ENCODE measurements at regions of chr12 and their contacts with region 1.

Region 1: DNA sequence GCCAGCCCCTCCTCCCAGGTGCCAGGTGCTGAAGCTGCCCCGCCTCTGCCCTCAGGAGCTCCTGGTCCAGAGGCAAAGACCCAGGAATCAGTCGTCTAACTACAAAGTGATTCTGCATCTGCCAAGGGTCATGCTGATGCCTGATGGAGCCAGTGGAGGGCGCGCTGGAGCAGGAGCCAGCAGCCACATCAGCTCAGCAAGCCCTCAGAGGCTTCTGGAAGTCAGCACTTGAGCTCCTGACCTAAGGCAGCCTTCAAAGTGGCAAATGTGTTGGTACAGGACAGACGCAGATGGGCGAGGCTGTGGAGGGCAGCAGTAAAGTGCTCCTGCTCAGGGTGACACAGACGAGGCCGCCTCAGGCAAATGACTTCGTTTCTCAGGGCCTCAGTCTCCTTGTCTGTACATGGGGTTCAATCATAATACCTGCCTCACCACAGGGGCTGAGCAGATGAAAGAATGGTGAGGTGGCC is 10.9 kb downstream of the C12orf43 start:
- DNase-seq: peak; percentile 57 to 87
- H3K4me3 ChIP-seq: no peak overlapping the region
- H3K27ac ChIP-seq: no peak overlapping the region
- H3K4me1 ChIP-seq: no peaks in the 10 kb centered on the region
- H3K27me3 ChIP-seq: no peaks in the 10 kb centered on the region
- CTCF ChIP-seq: peak; percentile 93 to 96 (median 96)
- EP300 ChIP-seq: no peak
- POLR2A ChIP-seq: no peak
- RAD21 ChIP-seq: peak; percentile 74 to 81

Region 2: DNA sequence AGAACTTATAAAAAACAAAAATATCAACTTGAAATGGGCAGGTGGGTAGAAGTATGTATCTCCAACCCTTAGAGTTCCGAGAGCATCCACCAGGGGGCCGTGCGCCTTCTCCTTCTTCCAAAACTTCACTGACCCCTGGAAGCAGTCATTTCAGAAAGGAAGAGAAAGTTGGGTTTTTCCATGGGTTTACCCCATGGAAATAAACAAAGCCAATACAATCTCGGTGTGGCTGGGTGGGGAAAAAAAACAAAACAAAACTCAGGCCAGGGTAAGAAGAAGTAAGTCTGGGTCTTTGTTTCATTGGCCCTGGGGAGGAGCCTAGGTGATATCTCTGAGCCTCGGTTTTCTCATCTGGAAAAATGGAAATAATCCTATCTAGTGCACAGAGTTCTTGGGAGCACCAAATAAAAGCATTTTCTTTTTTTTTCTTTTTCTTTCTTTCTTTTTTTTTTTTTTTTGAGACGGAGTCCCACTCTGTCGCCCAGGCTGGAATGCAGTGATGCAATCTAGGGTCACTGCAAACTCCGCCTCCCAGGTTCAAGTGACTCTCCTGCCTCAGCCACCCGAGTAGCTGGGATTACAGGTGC is 60.6 kb before region 1 on chr12:
- CTCF ChIA-PET with region 1: interaction called, 15 read pairs
- POLR2A ChIA-PET with region 1: interaction called, 3 read pairs
- DNase-seq: peak; percentile 36 to 90
- H3K4me3 ChIP-seq: no peak overlapping the region
- H3K27ac ChIP-seq: no peak overlapping the region
- H3K4me1 ChIP-seq: no peaks in the 10 kb centered on the region
- H3K27me3 ChIP-seq: no peaks in the 10 kb centered on the region
- CTCF ChIP-seq: peak; percentile 64 to 73 (median 73)
- EP300 ChIP-seq: no peak
- POLR2A ChIP-seq: no peak
- RAD21 ChIP-seq: peak; percentile 42 to 63

Region 3: DNA sequence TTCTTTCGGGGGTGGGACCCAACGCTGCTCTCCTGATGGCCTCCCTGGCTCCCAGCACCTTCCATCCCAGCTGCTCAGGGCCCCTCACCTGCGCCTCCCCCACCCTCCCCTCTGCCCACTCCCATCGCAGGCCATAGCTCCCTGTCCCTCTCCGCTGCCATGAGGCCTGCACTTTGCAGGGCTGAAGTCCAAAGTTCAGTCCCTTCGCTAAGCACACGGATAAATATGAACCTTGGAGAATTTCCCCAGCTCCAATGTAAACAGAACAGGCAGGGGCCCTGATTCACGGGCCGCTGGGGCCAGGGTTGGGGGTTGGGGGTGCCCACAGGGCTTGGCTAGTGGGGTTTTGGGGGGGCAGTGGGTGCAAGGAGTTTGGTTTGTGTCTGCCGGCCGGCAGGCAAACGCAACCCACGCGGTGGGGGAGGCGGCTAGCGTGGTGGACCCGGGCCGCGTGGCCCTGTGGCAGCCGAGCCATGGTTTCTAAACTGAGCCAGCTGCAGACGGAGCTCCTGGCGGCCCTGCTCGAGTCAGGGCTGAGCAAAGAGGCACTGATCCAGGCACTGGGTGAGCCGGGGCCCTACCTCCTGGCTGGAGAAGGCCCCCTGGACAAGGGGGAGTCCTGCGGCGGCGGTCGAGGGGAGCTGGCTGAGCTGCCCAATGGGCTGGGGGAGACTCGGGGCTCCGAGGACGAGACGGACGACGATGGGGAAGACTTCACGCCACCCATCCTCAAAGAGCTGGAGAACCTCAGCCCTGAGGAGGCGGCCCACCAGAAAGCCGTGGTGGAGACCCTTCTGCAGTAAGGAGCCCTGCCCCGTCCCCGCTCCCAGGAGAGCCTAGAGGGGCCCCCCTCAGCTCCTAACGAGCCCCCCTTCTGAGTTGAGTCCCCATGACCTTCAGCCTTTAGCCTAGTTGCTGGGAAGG is 26.8 kb before region 1 on chr12 and contains the start of gene HNF1A:
- CTCF ChIA-PET with region 1: interaction called, 26 read pairs
- POLR2A ChIA-PET with region 1: interaction called, 5 read pairs
- DNase-seq: no peak
- H3K4me3 ChIP-seq: no peak within 1 kb of the TSS
- H3K27ac ChIP-seq: no peak within 1 kb of the TSS
- H3K4me1 ChIP-seq: peaks cover 0 to 5% (median 1%) of the 10 kb centered on the region in 4 experiments; a peak in 3 of 7 replicates
- H3K27me3 ChIP-seq: no peaks in the 10 kb centered on the region
- CTCF ChIP-seq: no peak
- EP300 ChIP-seq: no peak
- POLR2A ChIP-seq: no peak
- RAD21 ChIP-seq: no peak
- total RNA-seq, gene HNF1A: not detected in 2 replicates

Region 4: DNA sequence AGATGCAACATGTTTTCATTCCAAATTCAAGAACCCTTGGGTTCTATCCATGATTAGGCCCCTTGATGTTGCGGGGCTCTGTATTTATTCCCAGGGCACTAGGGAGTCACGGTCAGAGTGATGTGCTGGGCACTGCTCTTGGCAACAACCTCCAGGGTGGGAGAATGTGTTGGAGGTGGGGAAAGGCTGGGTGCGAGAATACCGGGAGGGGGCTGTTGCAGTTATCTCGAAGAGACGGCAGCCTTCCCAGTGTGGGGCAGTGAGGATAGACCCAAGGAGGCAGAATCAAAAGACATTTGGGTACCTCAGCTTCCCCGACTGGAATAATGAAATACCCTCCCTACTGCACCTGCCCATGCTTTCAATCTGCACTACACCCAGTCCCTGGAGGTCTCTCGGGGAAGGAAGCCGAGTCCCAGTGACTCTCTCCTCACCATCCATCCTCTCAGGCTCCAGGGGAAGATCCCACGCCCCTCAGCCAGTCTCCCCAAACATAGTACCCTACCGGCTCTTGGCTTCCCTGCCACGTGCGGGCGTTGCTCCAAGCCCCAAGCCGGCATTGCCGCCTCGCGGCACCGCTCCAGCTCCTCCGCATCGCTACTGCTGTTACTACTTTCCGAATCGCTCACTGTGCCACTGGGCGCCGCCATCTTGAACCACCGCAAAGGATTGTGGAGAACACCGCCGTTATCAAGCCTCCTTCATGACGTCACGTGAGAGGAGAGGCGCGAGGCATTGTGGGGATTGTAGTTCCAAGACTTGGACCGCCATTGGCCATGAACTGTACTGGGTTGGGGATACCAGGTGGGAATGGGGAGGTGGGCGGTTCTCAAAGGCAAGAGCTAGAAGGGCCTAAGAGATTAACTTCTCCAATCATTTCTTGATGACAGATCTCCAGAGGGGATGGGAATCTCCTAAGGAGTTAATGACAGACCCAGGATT is 10.7 kb after region 1 on chr12 and contains the start of gene C12orf43:
- CTCF ChIA-PET with region 1: interaction called, 18 read pairs
- POLR2A ChIA-PET with region 1: interaction called, 19 read pairs
- DNase-seq: peak; percentile 65 to 96
- H3K4me3 ChIP-seq: peak within 1 kb of the TSS; percentile 95 to 100 (median 98)
- H3K27ac ChIP-seq: peak within 1 kb of the TSS; percentile 79
- H3K4me1 ChIP-seq: peaks cover 0 to 4% (median 3%) of the 10 kb centered on the region in 4 experiments; a peak in 5 of 7 replicates
- H3K27me3 ChIP-seq: no peaks in the 10 kb centered on the region
- CTCF ChIP-seq: no peak
- EP300 ChIP-seq: no peak
- POLR2A ChIP-seq: peak; percentile 79 to 95
- RAD21 ChIP-seq: no peak; a peak in 1 of 4 replicates
- total RNA-seq, gene C12orf43: 22.3 and 23.7 TPM in 2 replicates

Region 5: GRCh38 chr12:121060149-121061001 is 55.0 kb after region 1 on chr12:
- CTCF ChIA-PET with region 1: interaction called, 19 read pairs
- POLR2A ChIA-PET with region 1: no interaction called
- DNase-seq: peak; percentile 17 to 84
- H3K4me3 ChIP-seq: peak overlapping the region in 3 of 4 experiments; percentile 12 to 46 (median 29); a peak in 5 of 8 replicates
- H3K27ac ChIP-seq: peak overlapping the region; percentile 59; the same call in 1 of the 2 replicates
- H3K4me1 ChIP-seq: peaks cover 0 to 3% (median 0%) of the 10 kb centered on the region in 4 experiments; a peak in 1 of 7 replicates
- H3K27me3 ChIP-seq: no peaks in the 10 kb centered on the region
- CTCF ChIP-seq: peak; percentile 41 to 57 (median 53)
- EP300 ChIP-seq: no peak
- POLR2A ChIP-seq: no peak
- RAD21 ChIP-seq: peak; percentile 52 to 61

Region 6: GRCh38 chr12:121110211-121110940 is 105.0 kb after region 1 on chr12:
- CTCF ChIA-PET with region 1: interaction called, 22 read pairs
- POLR2A ChIA-PET with region 1: interaction called, 3 read pairs
- DNase-seq: peak in 1 of 2 experiments; percentile 68
- H3K4me3 ChIP-seq: no peak overlapping the region
- H3K27ac ChIP-seq: no peak overlapping the region
- H3K4me1 ChIP-seq: no peaks in the 10 kb centered on the region
- H3K27me3 ChIP-seq: no peaks in the 10 kb centered on the region
- CTCF ChIP-seq: peak; percentile 63 to 97 (median 90)
- EP300 ChIP-seq: no peak
- POLR2A ChIP-seq: no peak
- RAD21 ChIP-seq: peak; percentile 94 to 96

Region 7: DNA sequence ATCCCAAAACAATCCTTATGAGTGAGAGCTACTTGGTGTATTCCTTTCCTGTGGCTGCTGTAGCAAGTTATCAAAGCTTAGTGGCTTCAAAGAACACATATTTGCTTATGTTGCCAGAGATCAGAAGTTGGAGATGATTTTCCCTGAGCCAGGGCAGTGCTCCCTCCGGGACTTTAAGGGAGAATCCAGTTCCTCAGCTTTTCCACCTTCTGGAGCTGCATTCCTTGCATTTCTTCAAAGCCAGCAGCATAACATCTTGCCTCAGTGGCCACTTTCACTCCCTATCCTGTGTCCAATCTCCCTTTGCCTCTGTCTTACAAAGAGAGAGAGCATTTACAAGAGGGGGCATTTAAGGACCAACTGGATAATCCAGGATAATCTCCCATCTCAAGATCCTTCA is 161.0 kb after region 1 on chr12:
- CTCF ChIA-PET with region 1: no interaction called
- POLR2A ChIA-PET with region 1: no interaction called
- DNase-seq: no peak
- H3K4me3 ChIP-seq: no peak overlapping the region
- H3K27ac ChIP-seq: no peak overlapping the region
- H3K4me1 ChIP-seq: no peaks in the 10 kb centered on the region
- H3K27me3 ChIP-seq: no peaks in the 10 kb centered on the region
- CTCF ChIP-seq: no peak
- EP300 ChIP-seq: no peak
- POLR2A ChIP-seq: no peak
- RAD21 ChIP-seq: no peak

Measured in H1 (cell line).